Psoas muscle (tissue), 8 donors: ENCODE measurements at regions of chr1 and their contacts with region 1.

Region 1: GRCh38 chr1:244864253-244865027 is at the start of gene HNRNPU:
- DNase-seq: peak; percentile 98
- ATAC-seq: peak; percentile 83 to 89 (median 88)
- H3K4me3 ChIP-seq: peak within 1 kb of the TSS; percentile 97
- H3K27ac ChIP-seq: peak within 1 kb of the TSS; percentile 100
- H3K4me1 ChIP-seq: peaks cover 40% of the 10 kb centered on the region
- H3K27me3 ChIP-seq: no peaks in the 10 kb centered on the region
- CTCF ChIP-seq: peak; percentile 19
- total RNA-seq, gene HNRNPU: 163 to 262 (median 202) TPM

Region 2: DNA sequence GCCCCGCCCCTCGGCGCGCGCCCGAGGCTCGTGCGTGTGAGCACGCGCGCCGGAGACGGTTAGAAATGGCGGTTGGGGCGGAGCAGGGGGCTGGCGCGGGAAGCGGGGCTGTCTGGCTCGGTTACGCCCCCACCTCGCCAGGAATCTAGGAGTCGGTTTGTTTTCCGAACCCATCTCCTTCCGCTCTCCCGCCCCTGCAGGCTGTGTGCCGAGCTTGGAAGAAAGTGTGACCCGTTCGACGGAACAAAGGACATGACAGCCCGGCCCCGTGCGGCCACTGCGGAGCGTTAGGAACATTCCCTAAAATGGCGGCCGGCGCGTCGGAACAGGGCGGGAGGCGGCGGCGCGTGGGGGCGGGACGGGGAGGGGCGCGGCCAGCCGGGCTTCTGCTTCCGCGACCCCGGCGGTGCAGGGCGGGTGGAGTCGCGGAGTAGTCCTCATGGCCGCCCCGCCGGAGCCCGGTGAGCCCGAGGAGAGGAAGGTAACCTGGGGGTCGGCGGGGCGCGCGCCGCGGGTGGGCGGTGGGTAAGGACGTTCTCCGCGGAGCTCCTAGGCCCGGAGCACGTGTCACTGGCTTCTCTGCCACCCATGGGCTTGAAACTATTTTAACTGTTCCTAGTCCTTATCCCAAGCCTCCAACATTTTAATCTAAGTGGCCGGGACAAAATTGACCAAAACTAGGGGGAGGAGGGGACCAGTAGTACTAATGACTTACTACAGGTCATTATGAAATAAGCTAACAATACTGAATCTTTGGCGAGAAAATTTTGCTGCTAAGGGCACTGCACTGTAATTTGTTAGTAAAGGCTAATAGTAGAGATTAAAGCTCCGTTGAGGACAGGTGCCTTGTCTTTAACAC is 28.9 kb before region 1 on chr1 and contains the start of gene COX20:
- intact Hi-C with region 1: loop called in 1 of 2 experiments (anchors 2 kb)
- DNase-seq: peak; percentile 92 to 96
- ATAC-seq: peak; percentile 84 to 86 (median 85)
- H3K4me3 ChIP-seq: peak within 1 kb of the TSS; percentile 89
- H3K27ac ChIP-seq: peak within 1 kb of the TSS; percentile 97
- H3K4me1 ChIP-seq: peaks cover 39% of the 10 kb centered on the region
- H3K27me3 ChIP-seq: no peaks in the 10 kb centered on the region
- CTCF ChIP-seq: no peak
- total RNA-seq, gene COX20: 22.6 to 35.8 (median 33.4) TPM

Region 3: DNA sequence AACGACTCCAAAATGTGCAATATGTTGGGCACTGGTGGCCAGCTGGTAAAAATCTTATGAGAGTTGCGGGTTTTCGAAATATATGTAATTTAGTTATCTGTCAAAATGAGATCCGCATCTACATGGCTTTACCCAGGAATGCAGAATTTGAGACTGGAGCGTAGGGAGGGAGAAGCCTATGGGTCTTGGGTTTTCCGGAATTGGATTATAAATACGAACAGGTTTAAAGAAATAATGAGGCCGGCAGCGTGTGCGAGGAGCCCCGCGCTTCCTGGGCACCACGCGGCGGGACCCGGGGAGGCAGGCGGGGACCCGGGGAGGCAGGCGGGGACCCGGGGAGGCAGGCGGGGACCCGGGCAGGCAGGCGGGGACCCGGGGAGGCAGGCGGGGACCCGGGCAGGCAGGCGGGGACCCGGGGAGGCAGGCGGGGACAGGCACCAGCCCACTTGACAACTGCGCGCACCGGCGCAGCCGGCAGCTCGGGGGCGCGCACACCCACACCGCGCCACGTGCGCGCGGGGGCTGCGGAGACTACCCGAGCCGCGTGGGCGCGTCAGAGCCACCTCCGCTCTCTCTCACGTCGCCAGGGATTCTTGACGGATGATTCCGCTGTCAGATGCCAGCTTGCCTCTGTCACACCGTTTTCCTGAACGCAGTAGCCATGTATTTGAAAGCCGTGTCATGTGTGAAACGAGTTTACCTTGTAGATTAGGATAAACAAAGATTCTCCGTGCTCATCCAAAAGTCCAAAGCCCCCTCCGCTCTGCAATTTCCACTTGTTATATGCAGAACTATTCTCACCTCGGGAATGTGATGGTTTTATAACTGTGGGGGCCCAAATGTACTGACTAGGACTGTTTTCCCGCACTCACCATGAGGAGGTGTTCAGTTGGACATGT is 54.2 kb after region 1 on chr1:
- intact Hi-C with region 1: loop called (anchors 1 to 2 kb)
- DNase-seq: peak; percentile 70 to 86
- ATAC-seq: peak; percentile 84 to 93 (median 88)
- H3K4me3 ChIP-seq: peak overlapping the region; percentile 67
- H3K27ac ChIP-seq: peak overlapping the region; percentile 91
- H3K4me1 ChIP-seq: peaks cover 23% of the 10 kb centered on the region
- H3K27me3 ChIP-seq: no peaks in the 10 kb centered on the region
- CTCF ChIP-seq: peak; percentile 21

Region 4: GRCh38 chr1:244970661-244971551 is 106.5 kb after region 1 on chr1:
- intact Hi-C with region 1: loop called (anchors 1 to 2 kb)
- DNase-seq: peak; percentile 94 to 97
- ATAC-seq: peak; percentile 84 to 88 (median 86)
- H3K4me3 ChIP-seq: peak overlapping the region; percentile 73
- H3K27ac ChIP-seq: peak overlapping the region; percentile 98
- H3K4me1 ChIP-seq: peaks cover 23% of the 10 kb centered on the region
- H3K27me3 ChIP-seq: no peaks in the 10 kb centered on the region
- CTCF ChIP-seq: peak; percentile 45